ENCODE measurements at regions of chr16 and their contacts with region 1.

Region 1: GRCh38 chr16:70679666-70680494 is 6.0 kb downstream of the MTSS2 start:
- DNase-seq: no peak

Region 2: GRCh38 chr16:70737377-70738082 is 57.6 kb after region 1 on chr16:
- intact Hi-C with region 1: loop called (anchors 1 kb)
- DNase-seq: peak; percentile 84

Region 3: GRCh38 chr16:70770626-70771552 is 91.0 kb after region 1 on chr16:
- intact Hi-C with region 1: loop called (anchors 2 kb)
- DNase-seq: no peak